Ovary (tissue), 10 donors: ENCODE measurements at regions of chr20 and their contacts with region 1.

Region 1: GRCh38 chr20:50189681-50190582 is 698 bp upstream of the CEBPB start:
- DNase-seq: peak; percentile 93 to 96 (median 95)
- H3K4me3 ChIP-seq: peak overlapping the region; percentile 74
- H3K27ac ChIP-seq: peak overlapping the region; percentile 91 to 98
- H3K4me1 ChIP-seq: peaks cover 11% of the 10 kb centered on the region
- H3K27me3 ChIP-seq: no peaks in the 10 kb centered on the region
- CTCF ChIP-seq: peak; percentile 72 to 96 (median 84)
- EP300 ChIP-seq: no peak
- POLR2A ChIP-seq: peak; percentile 4

Region 2: GRCh38 chr20:50153485-50154377 is 36.2 kb before region 1 on chr20 and contains the start of gene PEDS1:
- intact Hi-C with region 1: no loop called
- DNase-seq: peak; percentile 90 to 95 (median 93)
- H3K4me3 ChIP-seq: peak within 1 kb of the TSS; percentile 51
- H3K27ac ChIP-seq: peak within 1 kb of the TSS; percentile 13 to 53
- H3K4me1 ChIP-seq: peaks cover 10% of the 10 kb centered on the region
- H3K27me3 ChIP-seq: no peaks in the 10 kb centered on the region
- CTCF ChIP-seq: peak in 2 of 3 donors; percentile 14 to 17
- EP300 ChIP-seq: no peak
- POLR2A ChIP-seq: peak; percentile 65
- total RNA-seq, gene PEDS1: 7.5 to 18.2 (median 12.6) TPM

Region 3: GRCh38 chr20:50245498-50246356 is 55.8 kb after region 1 on chr20:
- intact Hi-C with region 1: no loop called
- DNase-seq: no peak
- H3K4me3 ChIP-seq: no peak overlapping the region
- H3K27ac ChIP-seq: no peak overlapping the region
- H3K4me1 ChIP-seq: peaks cover 3% of the 10 kb centered on the region
- H3K27me3 ChIP-seq: no peaks in the 10 kb centered on the region
- CTCF ChIP-seq: no peak
- EP300 ChIP-seq: no peak
- POLR2A ChIP-seq: no peak

Region 4: GRCh38 chr20:50286609-50287008 is 96.7 kb after region 1 on chr20:
- intact Hi-C with region 1: loop called in 2 of 4 experiments (anchors 2 to 5 kb)
- DNase-seq: peak; percentile 83 to 92 (median 84)
- H3K4me3 ChIP-seq: no peak overlapping the region
- H3K27ac ChIP-seq: peak overlapping the region; percentile 92 to 95
- H3K4me1 ChIP-seq: peaks cover 34% of the 10 kb centered on the region
- H3K27me3 ChIP-seq: no peaks in the 10 kb centered on the region
- CTCF ChIP-seq: no peak
- EP300 ChIP-seq: no peak
- POLR2A ChIP-seq: peak; percentile 49

Region 5: DNA sequence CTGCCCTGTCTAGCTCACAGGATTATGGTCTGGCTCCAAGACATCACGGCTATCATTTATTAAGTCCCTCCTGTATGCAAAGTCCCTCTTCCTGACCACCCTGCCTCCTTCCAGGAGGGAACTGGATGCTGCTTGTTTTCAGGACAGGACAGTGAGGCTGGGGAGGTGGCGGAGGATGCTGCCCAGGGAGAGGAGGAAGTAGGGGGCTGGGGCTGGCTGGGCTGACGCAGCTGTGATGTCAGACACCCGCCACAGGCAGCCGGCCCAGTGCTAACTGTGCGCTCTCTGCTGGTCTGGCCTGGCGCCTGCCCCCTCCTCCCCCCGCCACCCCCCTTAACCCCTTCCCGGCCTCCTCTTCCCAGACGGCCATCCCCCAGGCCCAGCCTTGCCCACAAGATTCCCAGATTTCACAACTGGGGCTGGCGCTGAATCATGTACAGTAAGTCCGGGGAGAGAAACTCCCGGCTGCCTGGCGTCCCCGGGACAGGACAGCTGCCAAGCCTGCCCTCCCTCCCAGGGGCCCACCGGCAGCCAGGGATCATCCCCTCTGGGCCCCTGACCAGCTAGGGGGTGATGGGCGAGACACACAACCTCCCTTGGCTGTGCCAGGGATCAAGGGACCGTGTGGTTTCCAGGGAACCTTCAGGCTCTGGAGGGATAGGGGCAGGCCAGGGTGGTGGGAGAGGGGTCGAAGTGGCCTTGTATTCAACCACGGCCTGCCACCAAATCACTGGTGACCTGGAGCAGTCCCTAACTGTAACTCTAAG is 118.8 kb after region 1 on chr20:
- intact Hi-C with region 1: loop called in 3 of 4 experiments (anchors 5 kb)
- DNase-seq: peak; percentile 92 to 97 (median 95)
- H3K4me3 ChIP-seq: no peak overlapping the region
- H3K27ac ChIP-seq: peak overlapping the region; percentile 84 to 97
- H3K4me1 ChIP-seq: peaks cover 36% of the 10 kb centered on the region
- H3K27me3 ChIP-seq: no peaks in the 10 kb centered on the region
- CTCF ChIP-seq: no peak
- EP300 ChIP-seq: peak; percentile 75
- POLR2A ChIP-seq: peak; percentile 71

Region 6: GRCh38 chr20:50460460-50461267 is 270.7 kb after region 1 on chr20:
- intact Hi-C with region 1: loop called (anchors 1 to 2 kb)
- DNase-seq: peak; percentile 80 to 94 (median 90)
- H3K4me3 ChIP-seq: no peak overlapping the region
- H3K27ac ChIP-seq: no peak overlapping the region
- H3K4me1 ChIP-seq: peaks cover 5% of the 10 kb centered on the region
- H3K27me3 ChIP-seq: no peaks in the 10 kb centered on the region
- CTCF ChIP-seq: peak; percentile 58 to 98 (median 95)
- EP300 ChIP-seq: no peak
- POLR2A ChIP-seq: peak; percentile 39

Region 7: GRCh38 chr20:50744143-50744792 is 554.3 kb after region 1 on chr20:
- intact Hi-C with region 1: loop called in 2 of 4 experiments (anchors 10 kb)
- DNase-seq: peak; percentile 65 to 79 (median 74)
- H3K4me3 ChIP-seq: no peak overlapping the region
- H3K27ac ChIP-seq: peak overlapping the region; percentile 51 to 81
- H3K4me1 ChIP-seq: peaks cover 7% of the 10 kb centered on the region
- H3K27me3 ChIP-seq: no peaks in the 10 kb centered on the region
- CTCF ChIP-seq: peak in 2 of 3 donors; percentile 28 to 36
- EP300 ChIP-seq: no peak
- POLR2A ChIP-seq: no peak

Region 8: GRCh38 chr20:51318058-51318895 is 1128.3 kb after region 1 on chr20:
- intact Hi-C with region 1: no loop called
- DNase-seq: peak in 2 of 5 donors; percentile 29 to 45
- H3K4me3 ChIP-seq: no peak overlapping the region
- H3K27ac ChIP-seq: no peak overlapping the region
- H3K4me1 ChIP-seq: no peaks in the 10 kb centered on the region
- H3K27me3 ChIP-seq: no peaks in the 10 kb centered on the region
- CTCF ChIP-seq: no peak
- EP300 ChIP-seq: no peak
- POLR2A ChIP-seq: no peak